ENCODE measurements at regions of chr2 and their contacts with region 1.

Region 1: DNA sequence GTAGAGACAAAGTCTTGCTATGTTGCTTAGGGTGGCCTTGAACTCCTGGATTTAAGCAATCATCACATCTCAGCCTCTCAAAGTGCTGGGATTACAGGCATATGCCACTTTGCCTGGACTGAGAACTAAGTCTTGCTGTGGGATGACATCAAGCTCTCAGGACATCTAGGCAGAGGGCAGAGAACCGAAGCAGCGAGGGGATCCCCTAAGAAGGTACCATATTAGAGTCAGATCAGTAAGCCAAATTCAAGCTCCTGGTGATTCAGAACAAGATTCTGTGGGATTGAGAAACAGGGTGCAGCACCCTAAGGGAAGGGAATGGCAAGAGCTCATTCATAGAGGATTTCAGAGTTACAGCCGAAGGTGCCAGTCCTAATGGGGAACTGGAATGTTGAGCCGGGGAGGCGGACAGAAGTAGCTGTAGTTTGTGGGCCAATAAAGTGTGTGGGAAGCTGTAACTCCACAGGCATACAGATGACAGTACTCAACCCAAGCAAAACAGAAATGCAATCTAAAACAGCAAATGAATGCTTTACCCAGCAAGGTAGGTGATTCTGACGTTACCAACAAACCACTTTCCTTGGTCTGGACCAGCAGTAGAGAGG is 30.9 kb downstream of the EPHA4 start:
- DNase-seq: no peak
- ATAC-seq: no peak
- H3K4me3 ChIP-seq: no peak overlapping the region
- H3K4me3 Mint-ChIP-seq: no peak overlapping the region
- H3K27ac ChIP-seq: no peak overlapping the region
- H3K27ac Mint-ChIP-seq: no peak overlapping the region
- H3K4me1 ChIP-seq: no peaks in the 10 kb centered on the region
- H3K4me1 Mint-ChIP-seq: peaks cover 3 to 30% (median 12%) of the 10 kb centered on the region in 3 donors
- H3K27me3 ChIP-seq: no peaks in the 10 kb centered on the region
- H3K27me3 Mint-ChIP-seq: no peaks in the 10 kb centered on the region

Region 2: DNA sequence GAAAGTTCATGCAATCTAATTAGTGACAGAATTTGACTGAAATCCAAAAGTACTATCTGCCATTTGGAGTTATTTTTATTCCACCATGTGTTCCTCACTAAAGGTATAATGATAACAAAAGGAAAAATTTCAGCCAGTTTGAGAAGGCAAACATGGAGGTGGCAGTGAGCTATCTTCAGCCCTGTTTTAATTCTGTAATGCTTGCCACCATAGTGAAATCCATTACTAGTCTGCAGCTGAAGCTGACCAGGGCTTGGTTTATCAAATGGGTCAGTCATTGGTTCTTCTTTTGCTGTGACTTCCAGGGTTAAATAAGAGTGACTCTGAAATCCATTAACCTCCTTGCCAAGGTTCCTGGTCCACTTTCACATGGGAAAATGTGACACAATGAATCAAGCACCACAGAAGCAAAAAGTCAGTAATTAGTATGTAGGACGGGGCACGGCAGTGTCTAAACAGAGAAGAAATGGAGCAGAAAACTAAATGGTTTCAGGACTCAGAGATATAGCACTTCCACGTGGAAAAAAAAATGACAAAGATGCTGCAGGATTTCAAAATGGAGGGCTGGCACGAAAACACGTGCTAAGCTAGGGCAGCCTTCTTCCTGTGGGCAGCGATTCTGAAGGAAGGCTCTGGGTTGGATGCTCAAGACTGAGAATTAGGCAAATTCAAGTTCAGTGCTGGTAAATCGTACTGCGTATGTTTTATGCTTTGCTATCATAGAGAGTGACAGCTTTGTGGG is 56.3 kb before region 1 on chr2:
- CTCF ChIA-PET with region 1: no interaction called
- POLR2A ChIA-PET with region 1: interaction called in 1 of 2 experiments, 10 read pairs
- DNase-seq: no peak
- ATAC-seq: no peak
- H3K4me3 ChIP-seq: no peak overlapping the region
- H3K4me3 Mint-ChIP-seq: no peak overlapping the region
- H3K27ac ChIP-seq: no peak overlapping the region
- H3K27ac Mint-ChIP-seq: no peak overlapping the region
- H3K4me1 ChIP-seq: no peaks in the 10 kb centered on the region
- H3K4me1 Mint-ChIP-seq: peaks cover 0 to 12% (median 0%) of the 10 kb centered on the region in 3 donors
- H3K27me3 ChIP-seq: no peaks in the 10 kb centered on the region
- H3K27me3 Mint-ChIP-seq: no peaks in the 10 kb centered on the region